ENCODE measurements at regions of chr3 and their contacts with region 1.

Region 1: GRCh38 chr3:42129014-42129953 is 38.1 kb downstream of the TRAK1 start:
- DNase-seq: no peak
- CTCF ChIP-seq: no peak

Region 2: DNA sequence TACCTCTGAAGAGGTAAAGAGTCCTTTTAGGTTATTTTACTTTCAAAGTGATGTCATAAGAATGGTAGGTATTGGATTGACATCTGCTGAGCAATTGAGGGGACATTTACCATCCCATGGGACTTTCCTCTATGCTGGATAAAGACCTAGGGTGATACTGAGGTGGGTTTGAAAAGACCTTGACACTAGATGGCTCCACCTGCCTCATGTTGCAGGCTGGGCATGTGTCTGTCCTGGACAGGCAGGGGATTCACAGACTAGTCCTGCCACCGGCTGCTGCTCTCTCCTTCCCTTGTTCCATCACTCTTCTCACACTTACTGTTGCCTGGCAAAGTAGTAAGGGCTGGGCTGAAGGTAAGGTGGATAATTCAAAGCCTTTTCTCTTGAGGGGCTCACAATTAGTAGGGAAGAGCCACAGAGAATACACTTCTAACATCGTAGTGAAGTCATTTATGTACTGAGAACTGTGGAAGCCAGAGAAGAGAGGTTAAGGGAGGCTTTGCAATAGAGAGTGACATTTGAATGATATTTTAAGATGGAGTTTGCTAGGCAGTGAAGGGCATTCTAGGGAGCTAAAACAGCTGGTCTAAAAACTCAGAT is 10.4 kb before region 1 on chr3:
- CTCF ChIA-PET with region 1: interaction called, 17 read pairs
- POLR2A ChIA-PET with region 1: interaction called, 3 read pairs
- DNase-seq: peak; percentile 83
- CTCF ChIP-seq: peak; percentile 65

Region 3: GRCh38 chr3:42143440-42143839 is 14.2 kb after region 1 on chr3:
- CTCF ChIA-PET with region 1: interaction called, 12 read pairs
- POLR2A ChIA-PET with region 1: no interaction called
- DNase-seq: no peak
- CTCF ChIP-seq: no peak